SK-N-SH (cell line): ENCODE measurements at regions of chr19 and their contacts with region 1.

Region 1: DNA sequence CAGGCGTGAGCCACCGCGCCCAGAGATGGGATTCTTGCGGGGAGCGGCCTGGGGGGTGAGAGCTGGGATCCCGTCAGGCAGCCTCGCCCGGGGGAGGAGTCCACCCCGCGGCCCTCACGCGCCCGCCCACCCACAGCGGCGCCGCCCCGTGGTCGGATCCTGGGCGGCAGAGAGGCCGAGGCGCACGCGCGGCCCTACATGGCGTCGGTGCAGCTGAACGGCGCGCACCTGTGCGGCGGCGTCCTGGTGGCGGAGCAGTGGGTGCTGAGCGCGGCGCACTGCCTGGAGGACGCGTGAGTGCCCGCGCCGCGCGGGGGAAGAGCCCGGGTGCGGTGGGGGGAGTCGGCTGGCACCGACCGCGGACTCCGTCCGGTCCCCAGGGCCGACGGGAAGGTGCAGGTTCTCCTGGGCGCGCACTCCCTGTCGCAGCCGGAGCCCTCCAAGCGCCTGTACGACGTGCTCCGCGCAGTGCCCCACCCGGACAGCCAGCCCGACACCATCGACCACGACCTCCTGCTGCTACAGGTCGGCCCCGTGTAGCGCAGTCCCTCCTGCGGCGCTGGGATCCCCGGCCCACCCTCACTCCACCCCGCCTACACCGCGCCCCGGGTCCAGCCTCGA is 1.1 kb downstream of the CFD start:
- DNase-seq: peak; percentile 83
- H3K4me3 ChIP-seq: peak overlapping the region; percentile 46; a peak in 3 of 4 replicates
- H3K27ac ChIP-seq: no peak overlapping the region
- H3K4me1 ChIP-seq: peaks cover 0 to 4% of the 10 kb centered on the region in 2 experiments; a peak in 1 of 4 replicates
- H3K27me3 ChIP-seq: peaks cover 23% of the 10 kb centered on the region
- CTCF ChIP-seq: no peak
- EP300 ChIP-seq: no peak
- RAD21 ChIP-seq: no peak

Region 2: GRCh38 chr19:771332-771785 is 89.2 kb before region 1 on chr19:
- CTCF ChIA-PET with region 1: interaction called, 12 read pairs
- POLR2A ChIA-PET with region 1: no interaction called
- DNase-seq: peak; percentile 80
- H3K4me3 ChIP-seq: no peak overlapping the region
- H3K27ac ChIP-seq: no peak overlapping the region
- H3K4me1 ChIP-seq: no peaks in the 10 kb centered on the region
- H3K27me3 ChIP-seq: no peaks in the 10 kb centered on the region
- CTCF ChIP-seq: peak; percentile 50
- EP300 ChIP-seq: no peak
- RAD21 ChIP-seq: peak; percentile 33

Region 3: DNA sequence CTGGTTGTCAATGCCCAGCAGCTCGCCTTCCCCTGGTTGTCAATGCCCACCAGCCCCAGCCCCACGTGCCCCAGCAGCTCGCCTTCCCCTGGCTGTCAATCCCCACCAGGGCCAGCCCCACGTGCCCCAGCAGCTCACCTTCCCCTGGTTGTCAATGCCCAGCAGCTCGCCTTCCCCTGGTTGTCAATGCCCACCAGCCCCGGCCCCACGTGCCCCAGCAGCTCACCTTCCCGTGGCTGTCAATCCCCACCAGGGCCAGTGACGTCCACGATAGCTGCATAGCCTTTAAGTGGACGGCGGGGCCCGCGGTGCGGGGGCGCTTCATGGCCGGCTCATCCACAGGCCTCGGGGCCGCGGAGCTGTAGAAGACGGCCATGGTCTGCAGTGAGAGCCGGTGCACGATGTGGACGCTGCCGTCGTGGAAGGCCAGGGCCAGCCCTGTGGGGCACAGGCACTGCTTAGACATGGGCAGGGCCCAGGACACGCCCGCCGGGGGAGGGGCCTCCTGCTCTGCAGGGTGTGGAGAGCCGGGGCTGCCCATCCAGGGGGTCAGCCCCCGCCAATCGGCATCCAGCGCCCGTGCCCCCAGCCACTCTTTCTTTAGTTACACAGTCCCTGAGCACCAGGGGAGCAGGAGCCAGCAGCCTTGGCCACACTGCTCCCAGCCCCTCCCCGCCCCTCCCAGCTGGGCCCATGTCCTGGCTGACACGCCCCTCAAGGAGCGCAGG is 19.3 kb after region 1 on chr19:
- CTCF ChIA-PET with region 1: interaction called, 12 read pairs
- POLR2A ChIA-PET with region 1: no interaction called
- DNase-seq: no peak
- H3K4me3 ChIP-seq: no peak overlapping the region
- H3K27ac ChIP-seq: no peak overlapping the region
- H3K4me1 ChIP-seq: no peaks in the 10 kb centered on the region; a peak in 1 of 4 replicates
- H3K27me3 ChIP-seq: no peaks in the 10 kb centered on the region
- CTCF ChIP-seq: no peak
- EP300 ChIP-seq: no peak
- RAD21 ChIP-seq: no peak

Region 4: GRCh38 chr19:897436-898039 is 36.9 kb after region 1 on chr19:
- CTCF ChIA-PET with region 1: interaction called, 16 read pairs
- POLR2A ChIA-PET with region 1: no interaction called
- DNase-seq: peak; percentile 65
- H3K4me3 ChIP-seq: no peak overlapping the region
- H3K27ac ChIP-seq: no peak overlapping the region
- H3K4me1 ChIP-seq: no peaks in the 10 kb centered on the region; a peak in 1 of 4 replicates
- H3K27me3 ChIP-seq: no peaks in the 10 kb centered on the region
- CTCF ChIP-seq: peak; percentile 27; the same call in 1 of the 2 replicates
- EP300 ChIP-seq: no peak
- RAD21 ChIP-seq: no peak; the same call in 1 of the 2 replicates

Region 5: DNA sequence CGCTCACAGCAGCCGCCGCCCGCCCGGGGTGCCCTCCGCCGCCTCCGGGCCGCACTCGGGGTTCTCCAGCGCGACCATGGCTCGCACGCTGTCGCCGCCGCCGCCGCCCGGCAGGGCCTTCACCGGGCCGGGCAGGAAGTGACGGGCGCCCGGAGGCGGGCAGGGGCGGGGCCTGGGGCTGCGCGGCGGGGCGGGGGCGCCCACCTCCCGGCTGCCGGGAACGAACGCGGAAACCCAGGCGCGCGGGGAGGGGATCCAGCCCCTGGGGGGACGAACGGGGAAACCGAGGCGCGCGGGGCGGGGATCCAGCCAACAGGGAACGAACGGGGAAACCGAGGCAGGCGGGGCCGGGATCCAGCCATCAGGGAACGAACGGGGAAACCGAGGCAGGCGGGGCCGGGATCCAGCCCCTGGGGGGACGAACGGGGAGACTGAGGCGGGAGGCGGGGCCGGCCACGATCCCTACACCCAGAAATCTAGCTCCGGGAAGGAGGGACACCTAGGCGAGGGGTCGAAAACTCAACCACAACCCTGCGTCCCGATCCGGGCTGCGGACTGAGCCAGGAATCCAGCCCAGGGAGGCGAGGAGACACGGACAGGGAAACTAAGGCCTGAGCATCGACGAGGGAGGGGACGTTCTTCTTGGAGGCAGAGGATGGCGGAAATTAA is 52.6 kb after region 1 on chr19 and contains the start of gene R3HDM4:
- CTCF ChIA-PET with region 1: interaction called, 29 read pairs
- POLR2A ChIA-PET with region 1: no interaction called
- DNase-seq: peak; percentile 96
- H3K4me3 ChIP-seq: peak within 1 kb of the TSS; percentile 70 to 73
- H3K27ac ChIP-seq: peak within 1 kb of the TSS; percentile 6 to 74; a peak in 2 of 4 replicates
- H3K4me1 ChIP-seq: peaks cover 0 to 12% of the 10 kb centered on the region in 2 experiments; a peak in 2 of 4 replicates
- H3K27me3 ChIP-seq: peaks cover 16% of the 10 kb centered on the region
- CTCF ChIP-seq: no peak
- EP300 ChIP-seq: no peak
- RAD21 ChIP-seq: no peak
- polyA plus RNA-seq, gene R3HDM4: 39.2 and 41.4 TPM in 2 replicates

Region 6: DNA sequence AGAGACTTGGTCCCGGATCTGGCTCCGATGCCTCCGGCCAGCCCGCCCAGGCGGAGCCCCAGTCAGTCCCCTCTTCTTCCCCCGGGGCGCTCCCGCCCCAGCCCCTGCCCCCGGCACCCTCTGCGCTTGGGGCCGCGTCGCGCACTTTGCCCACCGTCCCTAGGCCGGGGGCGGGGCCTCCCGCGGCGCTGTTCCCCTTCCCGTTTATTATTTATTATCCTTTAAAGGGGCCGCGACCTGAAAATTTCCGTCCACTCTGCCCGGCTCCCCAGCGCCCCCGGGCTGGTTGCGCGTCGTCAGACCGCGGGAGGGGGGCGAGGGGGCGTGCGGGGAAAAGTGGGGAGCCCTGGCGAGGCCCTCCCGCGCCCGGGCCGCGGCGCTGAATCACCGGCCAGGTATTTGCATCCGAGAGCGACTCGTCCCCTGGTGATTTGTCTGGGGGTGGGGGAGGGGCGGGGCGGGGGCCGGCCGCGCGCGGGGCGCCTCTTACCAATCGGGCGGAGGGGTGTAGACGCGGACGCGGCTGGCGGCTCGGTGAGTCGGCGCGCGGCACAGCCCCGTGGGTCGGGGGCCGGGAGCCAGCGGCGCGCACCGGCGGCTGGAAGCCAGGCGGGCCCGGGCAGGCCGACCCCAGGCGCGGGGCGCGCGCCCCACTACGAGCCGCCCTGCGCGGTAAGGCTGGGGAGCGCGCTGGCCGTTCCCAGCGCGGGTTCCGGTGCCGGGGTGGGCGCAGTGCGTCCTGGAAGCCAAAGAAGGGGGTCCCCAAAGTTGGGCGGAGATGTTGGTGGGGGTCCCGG is 65.1 kb after region 1 on chr19 and contains the start of gene ARID3A:
- CTCF ChIA-PET with region 1: interaction called, 44 read pairs
- POLR2A ChIA-PET with region 1: no interaction called
- DNase-seq: peak; percentile 95
- H3K4me3 ChIP-seq: peak within 1 kb of the TSS; percentile 86 to 91
- H3K27ac ChIP-seq: peak within 1 kb of the TSS; percentile 54 to 85
- H3K4me1 ChIP-seq: peaks cover 7 to 18% of the 10 kb centered on the region in 2 experiments; a peak in 1 of 4 replicates
- H3K27me3 ChIP-seq: peaks cover 8% of the 10 kb centered on the region
- CTCF ChIP-seq: no peak
- EP300 ChIP-seq: no peak; a peak in 1 of 4 replicates
- RAD21 ChIP-seq: no peak; the same call in 1 of the 2 replicates
- polyA plus RNA-seq, gene ARID3A: 4.4 and 8.6 TPM in 2 replicates